ENCODE measurements at regions of chr2 and their contacts with region 1.

Region 1: GRCh38 chr2:9857814-9858729 is 14.8 kb downstream of the TAF1B start:
- DNase-seq: no peak
- H3K4me3 ChIP-seq: peak overlapping the region in 1 of 2 experiments; percentile 2; a peak in 1 of 4 replicates
- H3K27ac ChIP-seq: no peak overlapping the region
- H3K4me1 ChIP-seq: no peaks in the 10 kb centered on the region
- H3K27me3 ChIP-seq: no peaks in the 10 kb centered on the region
- CTCF ChIP-seq: no peak
- EP300 ChIP-seq: no peak
- RAD21 ChIP-seq: no peak

Region 2: GRCh38 chr2:9843229-9844035 is 14.6 kb before region 1 on chr2 and contains the start of gene TAF1B:
- CTCF ChIA-PET with region 1: interaction called, 3 read pairs
- POLR2A ChIA-PET with region 1: interaction called, 10 read pairs
- DNase-seq: peak; percentile 99
- H3K4me3 ChIP-seq: peak within 1 kb of the TSS; percentile 60 to 86
- H3K27ac ChIP-seq: peak within 1 kb of the TSS; percentile 89 to 95
- H3K4me1 ChIP-seq: peaks cover 15 to 20% of the 10 kb centered on the region in 2 experiments
- H3K27me3 ChIP-seq: no peaks in the 10 kb centered on the region
- CTCF ChIP-seq: peak; percentile 43
- EP300 ChIP-seq: no peak
- RAD21 ChIP-seq: no peak
- polyA plus RNA-seq, gene TAF1B: 7.8 and 8.3 TPM in 2 replicates

Region 3: DNA sequence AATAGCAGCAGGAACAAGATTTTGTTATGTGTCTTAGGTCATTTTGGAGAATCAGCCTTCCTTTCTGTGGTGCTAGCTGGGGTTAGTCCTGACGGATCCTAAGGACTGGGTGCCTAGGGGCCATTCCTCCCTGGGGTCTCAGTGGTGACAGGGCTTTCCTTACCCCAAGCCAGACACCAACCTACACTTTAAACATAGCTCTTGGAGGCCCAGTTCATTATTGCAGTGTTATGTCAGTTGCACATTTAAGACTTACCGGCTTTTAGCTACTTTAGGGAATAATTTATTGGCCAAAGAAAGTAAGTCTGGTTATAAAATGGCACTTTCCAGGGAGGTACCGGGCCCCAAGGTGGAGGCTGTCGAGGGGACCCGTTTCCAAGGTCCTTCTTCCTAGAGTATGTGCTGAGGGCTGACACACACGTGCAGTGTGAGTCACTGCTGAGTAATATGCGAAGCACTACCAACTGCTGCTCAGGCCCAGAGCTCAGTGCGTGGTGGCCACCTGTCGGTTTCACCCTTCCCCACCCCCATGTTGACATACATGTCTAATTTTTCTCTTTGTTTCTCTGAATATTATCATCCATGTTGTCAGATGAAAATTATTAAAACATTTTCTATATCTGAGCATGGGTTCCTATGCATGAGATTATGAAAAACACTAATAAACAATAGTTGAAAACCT is 56.5 kb after region 1 on chr2:
- CTCF ChIA-PET with region 1: no interaction called
- POLR2A ChIA-PET with region 1: no interaction called
- DNase-seq: no peak
- H3K4me3 ChIP-seq: no peak overlapping the region
- H3K27ac ChIP-seq: no peak overlapping the region; a peak in 1 of 4 replicates
- H3K4me1 ChIP-seq: peaks cover 0 to 14% of the 10 kb centered on the region in 2 experiments; a peak in 2 of 4 replicates
- H3K27me3 ChIP-seq: no peaks in the 10 kb centered on the region
- CTCF ChIP-seq: peak; percentile 45
- EP300 ChIP-seq: 0 out of 4 replicates have a peak, but pooled peaks of 1 of the 2 experiments have one; percentile 27
- RAD21 ChIP-seq: no peak